ENCODE measurements at regions of chr3 and their contacts with region 1.

Region 1: GRCh38 chr3:141575879-141576743 is 89.3 kb downstream of the RASA2 start:
- DNase-seq: peak; percentile 44
- ATAC-seq: peak; percentile 47
- H3K4me3 ChIP-seq: no peak overlapping the region
- H3K4me3 Mint-ChIP-seq: no peak overlapping the region
- H3K27ac ChIP-seq: peak overlapping the region in 1 of 2 donors; percentile 10
- H3K27ac Mint-ChIP-seq: peak overlapping the region; percentile 62
- H3K4me1 ChIP-seq: peaks cover 0 to 3% of the 10 kb centered on the region in 2 donors
- H3K4me1 Mint-ChIP-seq: peaks cover 6% of the 10 kb centered on the region
- H3K27me3 ChIP-seq: no peaks in the 10 kb centered on the region
- H3K27me3 Mint-ChIP-seq: no peaks in the 10 kb centered on the region
- CTCF ChIP-seq: peak; percentile 70

Region 2: DNA sequence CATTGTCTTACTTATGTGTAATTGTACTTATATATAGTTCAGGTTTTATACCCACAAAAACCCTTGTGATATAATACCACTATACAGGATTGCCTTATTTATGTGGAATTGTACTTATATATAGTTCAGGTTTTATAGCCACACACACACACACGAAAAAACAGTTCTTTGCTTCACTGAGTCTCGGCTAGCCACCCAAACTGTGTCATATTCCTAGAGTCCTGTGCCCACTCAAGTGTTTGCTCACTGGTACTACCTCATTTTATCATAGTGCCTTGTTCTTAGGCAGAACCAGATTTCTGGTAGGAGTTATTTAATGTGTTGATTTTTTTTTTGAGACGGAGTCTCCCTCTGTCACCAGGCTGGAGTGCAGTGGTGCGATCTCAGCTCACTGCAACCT is 76.8 kb before region 1 on chr3:
- CTCF ChIA-PET with region 1: no interaction called
- POLR2A ChIA-PET with region 1: no interaction called
- intact Hi-C with region 1: no loop called
- DNase-seq: no peak
- ATAC-seq: peak; percentile 26
- H3K4me3 ChIP-seq: peak overlapping the region in 4 of 5 experiments; percentile 35 to 57 (median 42)
- H3K4me3 Mint-ChIP-seq: peak overlapping the region; percentile 79
- H3K27ac ChIP-seq: peak overlapping the region; percentile 69 to 87
- H3K27ac Mint-ChIP-seq: peak overlapping the region; percentile 91
- H3K4me1 ChIP-seq: peaks cover 19 to 35% of the 10 kb centered on the region in 2 donors
- H3K4me1 Mint-ChIP-seq: peaks cover 53% of the 10 kb centered on the region
- H3K27me3 ChIP-seq: no peaks in the 10 kb centered on the region
- H3K27me3 Mint-ChIP-seq: no peaks in the 10 kb centered on the region
- CTCF ChIP-seq: no peak

Region 3: DNA sequence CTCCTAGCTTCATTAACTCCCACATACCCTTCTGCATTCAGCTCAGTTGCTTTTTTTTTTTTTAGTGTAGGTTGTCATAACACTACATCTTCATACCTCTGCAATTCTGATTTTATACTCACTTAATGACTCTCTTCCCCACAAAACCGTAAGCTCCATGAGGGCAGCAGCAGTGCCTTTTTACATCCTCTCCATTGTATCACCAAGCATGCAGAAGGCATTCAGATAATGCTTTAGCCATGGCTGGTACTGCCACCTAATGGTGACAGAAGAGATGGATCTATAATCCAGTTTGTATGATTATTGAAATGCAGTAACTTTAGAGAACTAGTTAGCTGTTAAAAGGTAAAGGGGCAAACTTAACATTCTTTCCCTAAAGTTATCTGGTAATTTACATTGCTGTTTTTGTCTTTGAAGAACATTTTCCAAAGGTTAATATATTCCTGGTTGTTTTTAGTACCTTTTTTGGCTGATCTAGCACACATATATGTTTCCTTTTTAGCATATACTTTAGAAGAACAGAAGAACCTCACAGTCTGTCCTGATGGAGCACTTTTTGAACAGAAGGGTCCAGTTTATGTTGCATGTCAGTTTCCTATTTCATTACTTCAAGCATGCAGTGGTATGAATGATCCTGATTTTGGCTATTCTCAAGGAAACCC is 337.2 kb after region 1 on chr3:
- CTCF ChIA-PET with region 1: interaction called, 25 read pairs
- POLR2A ChIA-PET with region 1: no interaction called
- intact Hi-C with region 1: no loop called
- DNase-seq: peak; percentile 65
- ATAC-seq: peak; percentile 70
- H3K4me3 ChIP-seq: no peak overlapping the region
- H3K4me3 Mint-ChIP-seq: no peak overlapping the region
- H3K27ac ChIP-seq: no peak overlapping the region
- H3K27ac Mint-ChIP-seq: no peak overlapping the region
- H3K4me1 ChIP-seq: no peaks in the 10 kb centered on the region
- H3K4me1 Mint-ChIP-seq: no peaks in the 10 kb centered on the region
- H3K27me3 ChIP-seq: no peaks in the 10 kb centered on the region
- H3K27me3 Mint-ChIP-seq: no peaks in the 10 kb centered on the region
- CTCF ChIP-seq: peak; percentile 78

Region 4: DNA sequence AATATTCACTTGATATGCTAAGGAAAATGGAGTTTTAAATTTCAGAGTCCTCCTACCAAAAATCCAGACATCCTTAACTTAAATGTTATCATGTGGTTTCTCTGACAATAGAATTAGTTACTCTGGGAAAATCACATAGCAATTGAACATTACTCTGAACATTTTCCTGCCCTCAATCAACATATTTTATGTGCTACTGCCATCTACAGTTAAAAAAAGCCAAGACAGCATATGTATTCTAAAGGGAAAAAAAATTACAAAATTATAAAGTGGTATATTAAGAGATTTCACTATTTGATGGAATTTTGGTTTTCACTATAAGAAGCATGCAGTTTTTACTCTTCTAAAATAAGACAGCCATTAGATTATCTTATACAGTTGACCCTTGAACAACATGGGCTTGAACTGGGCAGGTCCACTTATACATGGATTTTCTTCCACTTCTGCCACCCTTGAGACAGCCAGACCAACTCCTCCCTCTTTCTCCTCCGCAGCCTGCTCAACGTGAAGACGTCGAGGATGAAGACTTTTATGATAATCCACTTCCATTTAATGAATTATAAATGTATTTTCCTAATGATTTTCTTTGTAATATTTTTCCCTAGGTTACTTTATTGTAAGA is 422.7 kb after region 1 on chr3:
- CTCF ChIA-PET with region 1: no interaction called
- POLR2A ChIA-PET with region 1: no interaction called
- intact Hi-C with region 1: loop called (anchors 10 kb)
- DNase-seq: peak; percentile 10
- ATAC-seq: no peak
- H3K4me3 ChIP-seq: no peak overlapping the region
- H3K4me3 Mint-ChIP-seq: no peak overlapping the region
- H3K27ac ChIP-seq: no peak overlapping the region
- H3K27ac Mint-ChIP-seq: no peak overlapping the region
- H3K4me1 ChIP-seq: no peaks in the 10 kb centered on the region
- H3K4me1 Mint-ChIP-seq: peaks cover 4% of the 10 kb centered on the region
- H3K27me3 ChIP-seq: no peaks in the 10 kb centered on the region
- H3K27me3 Mint-ChIP-seq: no peaks in the 10 kb centered on the region
- CTCF ChIP-seq: peak; percentile 35